PC-3 (cell line): ENCODE measurements at regions of chr3 and their contacts with region 1.

Region 1: GRCh38 chr3:83048556-83048955 is 1287.1 kb upstream of the GBE1 start:
- DNase-seq: peak; percentile 53
- ATAC-seq: peak; percentile 69
- H3K4me3 ChIP-seq: no peak overlapping the region
- H3K27ac ChIP-seq: no peak overlapping the region
- H3K4me1 ChIP-seq: no peaks in the 10 kb centered on the region; the same call in 1 of the 2 replicates
- H3K27me3 ChIP-seq: no peaks in the 10 kb centered on the region
- CTCF ChIP-seq: peak; percentile 50; the same call in 1 of the 2 replicates

Region 2: DNA sequence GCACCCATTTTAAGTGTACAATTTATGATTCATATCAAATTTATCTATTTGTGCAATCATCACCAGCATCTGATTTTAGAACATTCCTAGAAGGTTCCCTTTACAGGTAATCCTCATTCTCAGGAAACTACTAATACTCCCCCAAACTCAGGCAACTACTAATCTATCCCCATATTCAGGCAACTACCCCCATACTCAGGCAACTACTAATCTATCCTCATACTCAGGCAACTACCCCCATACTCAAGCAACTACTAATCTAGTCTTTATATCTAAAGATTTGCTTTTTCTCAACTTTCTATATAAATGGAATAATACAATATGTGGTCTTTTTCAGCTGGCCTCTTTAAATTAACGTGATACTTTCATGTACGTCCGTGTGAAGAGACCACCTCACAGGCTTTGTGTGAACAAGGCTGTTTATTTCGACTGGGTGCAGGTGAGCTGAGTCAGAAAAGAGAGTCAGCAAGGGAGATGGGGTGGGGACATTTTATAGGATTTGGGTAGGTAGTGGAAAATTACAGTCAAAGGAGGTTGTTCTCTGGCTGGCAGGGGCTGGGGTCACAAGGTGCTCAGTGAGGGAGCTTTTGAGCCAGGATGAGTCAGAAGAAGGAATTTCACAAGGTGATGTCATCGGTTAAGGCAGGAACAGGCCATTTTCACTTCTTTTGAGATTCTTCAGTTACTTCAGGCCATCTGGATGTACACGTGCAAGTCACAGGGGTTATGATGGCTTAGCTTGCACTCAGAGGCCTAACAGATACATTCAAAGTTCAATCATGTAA is 465.8 kb after region 1 on chr3:
- CTCF ChIA-PET with region 1: no interaction called
- POLR2A ChIA-PET with region 1: no interaction called
- intact Hi-C with region 1: loop called (anchors 1 kb)
- DNase-seq: peak; percentile 93
- ATAC-seq: peak; percentile 86
- H3K4me3 ChIP-seq: no peak overlapping the region
- H3K27ac ChIP-seq: peak overlapping the region; percentile 58
- H3K4me1 ChIP-seq: peaks cover 16% of the 10 kb centered on the region
- H3K27me3 ChIP-seq: no peaks in the 10 kb centered on the region
- CTCF ChIP-seq: no peak